ENCODE measurements at regions of chr11 and their contacts with region 1.

Region 1: DNA sequence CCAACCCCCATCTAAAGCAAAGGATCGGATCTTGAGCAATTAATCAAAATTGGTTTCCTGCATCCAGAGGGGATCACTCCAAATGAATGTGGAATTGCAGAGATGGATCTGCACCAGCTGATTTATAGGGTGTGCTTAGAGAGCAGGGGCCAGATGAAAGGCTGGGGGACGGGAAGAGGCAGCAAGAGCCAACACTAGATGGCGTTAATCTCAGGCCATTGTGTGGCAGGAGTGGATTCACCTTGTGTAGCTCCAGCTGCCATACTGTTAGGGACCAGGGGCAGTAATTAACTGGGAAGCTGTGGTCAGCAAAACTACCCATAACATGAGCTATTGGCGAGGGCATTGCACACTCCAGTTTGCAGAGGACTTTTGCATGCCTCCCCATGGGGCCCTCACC is 35.6 kb downstream of the SERPINH1 start:
- DNase-seq: peak; percentile 76 to 80
- H3K4me3 ChIP-seq: no peak overlapping the region
- H3K4me3 Mint-ChIP-seq: no peak overlapping the region
- H3K27ac Mint-ChIP-seq: no peak overlapping the region
- H3K4me1 ChIP-seq: peaks cover 10% of the 10 kb centered on the region
- H3K4me1 Mint-ChIP-seq: peaks cover 9% of the 10 kb centered on the region
- H3K27me3 ChIP-seq: no peaks in the 10 kb centered on the region
- H3K27me3 Mint-ChIP-seq: no peaks in the 10 kb centered on the region
- CTCF ChIP-seq: peak; percentile 87 to 90

Region 2: DNA sequence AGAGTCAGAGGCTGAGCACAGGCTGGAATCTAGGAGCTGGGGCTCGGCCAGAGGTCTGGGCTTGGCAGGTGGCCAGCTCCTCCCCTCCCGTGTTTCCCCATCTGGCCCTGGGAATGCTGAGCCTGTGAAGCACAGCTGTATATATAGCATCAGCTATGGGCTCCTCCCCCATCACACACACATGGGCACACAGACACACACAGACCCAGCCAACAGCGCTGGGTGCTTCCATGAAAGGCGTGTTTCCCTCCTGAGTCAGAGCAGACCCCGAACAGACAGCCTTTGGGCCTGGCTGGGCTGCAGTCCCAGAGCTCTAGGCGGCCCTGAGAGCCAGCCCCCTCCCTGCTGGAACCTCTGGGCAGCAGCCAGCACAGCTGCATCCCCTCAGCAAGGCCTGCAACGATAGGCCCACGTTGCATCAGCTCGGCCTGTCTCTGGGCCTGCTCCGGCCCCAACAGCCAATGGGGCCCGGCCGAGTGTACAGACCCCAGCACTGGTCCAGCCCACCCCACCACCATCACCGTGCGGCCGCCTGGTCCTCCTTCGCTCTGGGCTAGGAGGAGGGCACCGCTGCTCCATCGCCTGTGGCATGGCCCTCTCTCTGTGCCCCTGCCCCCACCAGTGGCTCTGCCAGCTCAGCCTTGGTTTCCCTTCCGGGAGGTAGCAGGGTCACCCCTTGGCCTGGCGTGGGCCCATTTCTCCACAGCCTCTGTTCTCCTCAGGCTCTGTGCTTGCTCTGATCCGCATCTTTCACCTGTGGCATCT is 43.2 kb before region 1 on chr11:
- CTCF ChIA-PET with region 1: interaction called, 10 read pairs
- POLR2A ChIA-PET with region 1: no interaction called
- intact Hi-C with region 1: no loop called
- DNase-seq: peak in 1 of 2 experiments; percentile 52
- H3K4me3 ChIP-seq: no peak overlapping the region
- H3K4me3 Mint-ChIP-seq: no peak overlapping the region
- H3K27ac Mint-ChIP-seq: peak overlapping the region; percentile 82
- H3K4me1 ChIP-seq: peaks cover 26% of the 10 kb centered on the region
- H3K4me1 Mint-ChIP-seq: peaks cover 45% of the 10 kb centered on the region
- H3K27me3 ChIP-seq: no peaks in the 10 kb centered on the region
- H3K27me3 Mint-ChIP-seq: no peaks in the 10 kb centered on the region
- CTCF ChIP-seq: no peak

Region 3: DNA sequence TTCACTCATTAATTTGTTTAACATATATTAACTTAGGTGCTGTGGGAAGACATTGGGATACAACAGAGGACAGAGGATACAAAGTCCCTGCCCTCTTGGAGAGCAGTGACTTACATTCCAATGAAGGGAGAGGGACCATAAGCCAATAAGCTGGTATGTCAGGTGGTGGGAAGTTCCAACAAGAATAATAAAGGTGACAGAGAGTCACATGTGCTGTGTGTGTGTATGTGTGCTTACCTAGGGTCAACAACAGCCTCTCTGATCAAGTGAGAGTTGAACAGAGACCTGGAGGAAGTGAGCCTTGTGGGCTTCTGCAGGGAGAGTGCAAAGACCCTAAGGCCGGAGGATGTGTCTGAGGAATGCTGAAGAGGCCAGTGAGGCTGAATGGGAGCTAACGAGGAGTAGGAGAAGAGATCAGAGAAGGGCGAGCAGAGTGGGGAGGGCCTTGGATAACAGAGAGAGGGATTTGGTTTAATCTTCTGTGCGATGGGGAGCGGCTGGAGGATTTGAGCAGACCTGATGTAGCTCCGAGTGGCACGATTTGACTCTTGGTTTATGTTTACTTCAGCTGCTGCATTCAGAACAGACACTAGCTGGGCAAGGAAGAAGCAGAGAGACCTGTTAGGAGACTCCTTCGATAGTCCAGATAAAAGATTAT is 35.9 kb after region 1 on chr11:
- CTCF ChIA-PET with region 1: interaction called, 10 read pairs
- POLR2A ChIA-PET with region 1: no interaction called
- intact Hi-C with region 1: loop called (anchors 2 kb)
- DNase-seq: peak; percentile 85 to 89
- H3K4me3 ChIP-seq: no peak overlapping the region
- H3K4me3 Mint-ChIP-seq: peak overlapping the region; percentile 50
- H3K27ac Mint-ChIP-seq: peak overlapping the region; percentile 92
- H3K4me1 ChIP-seq: peaks cover 65% of the 10 kb centered on the region
- H3K4me1 Mint-ChIP-seq: peaks cover 43% of the 10 kb centered on the region
- H3K27me3 ChIP-seq: no peaks in the 10 kb centered on the region
- H3K27me3 Mint-ChIP-seq: no peaks in the 10 kb centered on the region
- CTCF ChIP-seq: no peak

Region 4: DNA sequence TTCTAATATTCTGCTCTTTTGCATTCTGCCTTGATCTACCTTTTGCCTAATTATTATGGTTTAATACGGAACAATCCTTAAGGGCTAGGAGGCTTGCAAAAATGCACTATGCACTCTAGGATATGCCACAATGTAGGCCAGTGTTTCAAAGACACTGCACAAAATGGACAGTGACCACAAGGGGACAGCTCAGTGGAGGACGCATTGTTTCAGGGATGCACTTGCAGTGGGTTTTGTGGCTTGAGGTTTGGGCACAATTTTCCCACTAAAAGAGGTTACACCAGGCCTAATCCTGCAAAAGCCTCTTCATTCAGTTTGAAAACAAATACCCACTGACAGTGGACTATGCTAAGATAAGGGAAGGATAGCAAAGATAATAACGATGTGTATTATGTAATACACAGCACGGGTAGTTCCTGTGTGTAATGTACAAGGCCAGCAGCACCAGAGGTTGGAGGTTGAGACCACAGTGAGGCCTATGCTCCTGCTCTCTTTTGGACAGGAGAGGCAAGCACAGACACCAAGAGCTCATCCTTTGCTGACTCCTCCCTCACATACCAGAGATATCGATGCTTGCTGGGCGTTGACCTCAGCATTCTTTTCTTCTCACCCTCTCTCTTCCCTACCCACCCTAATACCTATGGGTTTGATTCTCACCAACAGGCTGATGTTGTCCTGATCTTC is 58.5 kb after region 1 on chr11:
- CTCF ChIA-PET with region 1: interaction called, 18 read pairs
- POLR2A ChIA-PET with region 1: no interaction called
- intact Hi-C with region 1: no loop called
- DNase-seq: peak; percentile 82 to 96
- H3K4me3 ChIP-seq: no peak overlapping the region
- H3K4me3 Mint-ChIP-seq: peak overlapping the region; percentile 3
- H3K27ac Mint-ChIP-seq: peak overlapping the region; percentile 6
- H3K4me1 ChIP-seq: peaks cover 89% of the 10 kb centered on the region
- H3K4me1 Mint-ChIP-seq: peaks cover 65% of the 10 kb centered on the region
- H3K27me3 ChIP-seq: no peaks in the 10 kb centered on the region
- H3K27me3 Mint-ChIP-seq: no peaks in the 10 kb centered on the region
- CTCF ChIP-seq: peak; percentile 26 to 36

Region 5: GRCh38 chr11:75697906-75698563 is 100.4 kb after region 1 on chr11:
- CTCF ChIA-PET with region 1: interaction called, 6 read pairs
- POLR2A ChIA-PET with region 1: no interaction called
- intact Hi-C with region 1: loop called (anchors 1 kb)
- DNase-seq: peak; percentile 93 to 96
- H3K4me3 ChIP-seq: no peak overlapping the region
- H3K4me3 Mint-ChIP-seq: peak overlapping the region; percentile 30
- H3K27ac Mint-ChIP-seq: peak overlapping the region; percentile 85
- H3K4me1 ChIP-seq: peaks cover 30% of the 10 kb centered on the region
- H3K4me1 Mint-ChIP-seq: peaks cover 50% of the 10 kb centered on the region
- H3K27me3 ChIP-seq: no peaks in the 10 kb centered on the region
- H3K27me3 Mint-ChIP-seq: no peaks in the 10 kb centered on the region
- CTCF ChIP-seq: no peak

Region 6: GRCh38 chr11:75786101-75786736 is 188.6 kb after region 1 on chr11:
- CTCF ChIA-PET with region 1: interaction called, 10 read pairs
- POLR2A ChIA-PET with region 1: no interaction called
- intact Hi-C with region 1: no loop called
- DNase-seq: peak; percentile 97 to 98
- H3K4me3 ChIP-seq: no peak overlapping the region
- H3K4me3 Mint-ChIP-seq: peak overlapping the region; percentile 53
- H3K27ac Mint-ChIP-seq: peak overlapping the region; percentile 77
- H3K4me1 ChIP-seq: peaks cover 60% of the 10 kb centered on the region
- H3K4me1 Mint-ChIP-seq: peaks cover 57% of the 10 kb centered on the region
- H3K27me3 ChIP-seq: no peaks in the 10 kb centered on the region
- H3K27me3 Mint-ChIP-seq: no peaks in the 10 kb centered on the region
- CTCF ChIP-seq: no peak